ENCODE measurements at regions of chr21 and their contacts with region 1.

Region 1: DNA sequence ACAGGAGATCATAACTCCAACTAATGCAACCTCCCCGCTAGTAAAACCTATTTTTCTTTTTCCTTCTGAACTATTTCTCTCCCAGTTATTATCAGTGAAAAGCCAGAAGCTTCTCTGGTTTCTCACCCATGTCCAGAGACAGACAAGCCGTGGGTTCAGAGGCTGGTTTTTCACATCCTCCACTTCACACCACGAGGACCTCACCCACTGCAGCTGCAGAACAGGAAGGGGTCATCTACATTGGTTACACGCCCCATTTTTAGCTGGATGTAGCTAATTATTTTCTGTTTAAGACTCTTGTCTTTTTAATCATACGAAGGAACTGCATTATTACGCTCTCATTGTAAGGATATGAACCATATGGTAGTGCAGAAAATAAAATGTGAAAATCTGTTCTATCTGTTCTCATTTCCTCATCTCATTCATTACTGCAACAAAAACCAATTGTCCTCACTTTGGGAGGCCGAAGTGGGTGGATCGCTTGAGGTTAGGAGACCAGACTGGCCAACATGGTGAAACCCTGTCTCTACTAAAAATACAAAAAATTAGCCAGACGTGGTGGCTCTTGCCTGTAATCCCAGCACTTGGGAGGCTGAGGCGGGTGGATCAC is 39.1 kb upstream of the CLDN14 start:
- DNase-seq: no peak

Region 2: DNA sequence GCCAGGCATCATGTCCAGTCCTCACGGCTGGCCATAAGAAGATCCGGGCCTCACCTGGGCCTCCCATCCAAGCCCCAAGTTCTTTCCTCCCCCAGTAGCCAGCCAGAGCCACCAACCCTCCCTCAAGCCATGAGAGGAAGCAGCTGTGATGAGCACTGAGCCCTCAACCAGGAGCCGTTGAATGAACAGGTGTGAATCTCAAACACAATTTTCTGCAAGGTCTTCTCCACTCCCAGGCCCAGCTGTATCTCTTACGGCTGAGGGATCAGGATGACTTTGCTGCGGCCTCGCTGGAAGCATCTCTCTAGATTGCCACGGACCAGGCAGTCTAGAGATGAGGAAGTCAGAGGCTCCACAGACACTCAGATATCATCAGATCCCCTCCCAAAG is 29.2 kb before region 1 on chr21:
- intact Hi-C with region 1: loop called in 1 of 2 experiments (anchors 1 kb)
- DNase-seq: no peak

Measured in posterior vena cava (tissue), 2 donors.